Panc1 (cell line): ENCODE measurements at regions of chr2 and their contacts with region 1.

Region 1: GRCh38 chr2:227415538-227416424 is 28.0 kb upstream of the SCYGR1 start:
- DNase-seq: no peak
- ATAC-seq: peak; percentile 67; the same call in 1 of the 2 replicates
- H3K4me3 ChIP-seq: no peak overlapping the region
- H3K27ac ChIP-seq: no peak overlapping the region
- H3K4me1 ChIP-seq: no peaks in the 10 kb centered on the region
- H3K27me3 ChIP-seq: no peaks in the 10 kb centered on the region
- CTCF ChIP-seq: no peak

Region 2: GRCh38 chr2:227534714-227535113 is 118.9 kb after region 1 on chr2:
- CTCF ChIA-PET with region 1: interaction called, 10 read pairs
- POLR2A ChIA-PET with region 1: no interaction called
- in situ Hi-C with region 1: no loop called
- intact Hi-C with region 1: no loop called
- DNase-seq: no peak
- ATAC-seq: no peak
- H3K4me3 ChIP-seq: no peak overlapping the region
- H3K27ac ChIP-seq: no peak overlapping the region
- H3K4me1 ChIP-seq: no peaks in the 10 kb centered on the region
- H3K27me3 ChIP-seq: no peaks in the 10 kb centered on the region
- CTCF ChIP-seq: no peak